Endothelial cell of umbilical vein (primary cell): ENCODE measurements at regions of chr22 and their contacts with region 1.

Region 1: DNA sequence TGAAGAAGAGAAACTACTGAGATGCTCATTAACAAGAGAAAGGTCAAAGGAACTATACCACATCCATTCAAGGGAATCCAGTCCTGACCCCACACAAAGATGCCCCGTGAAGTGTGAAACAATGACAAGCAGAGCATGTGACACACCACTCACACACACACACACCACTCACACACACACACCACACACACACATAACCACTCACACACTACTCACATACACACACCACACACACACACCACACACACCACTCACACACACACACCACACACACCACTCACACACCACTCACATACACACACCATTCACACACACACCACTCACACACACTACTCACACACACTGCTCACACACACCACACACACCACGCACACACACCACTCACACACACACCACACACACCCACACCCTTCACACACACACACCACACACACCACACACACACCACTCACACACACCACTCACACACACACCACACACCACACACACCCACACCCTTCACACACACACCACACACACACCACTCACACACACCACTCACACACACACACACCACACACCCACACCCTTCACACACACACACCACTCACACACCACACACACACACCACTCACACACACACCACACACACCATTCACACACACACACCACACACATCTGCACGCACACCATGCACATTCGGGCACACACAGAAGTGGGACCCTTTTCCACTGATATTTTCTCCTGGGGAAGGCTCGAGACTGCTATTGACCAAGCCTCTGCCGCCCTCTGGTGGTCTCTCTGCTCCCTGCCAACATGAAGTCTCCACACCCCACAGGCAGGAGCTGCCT is 32.0 kb upstream of the COMT start:
- DNase-seq: peak; percentile 77
- H3K4me3 ChIP-seq: no peak overlapping the region
- H3K27ac ChIP-seq: no peak overlapping the region
- H3K4me1 ChIP-seq: peaks cover 3% of the 10 kb centered on the region
- H3K27me3 ChIP-seq: no peaks in the 10 kb centered on the region
- CTCF ChIP-seq: peak; percentile 86 to 88
- POLR2A ChIP-seq: no peak

Region 2: DNA sequence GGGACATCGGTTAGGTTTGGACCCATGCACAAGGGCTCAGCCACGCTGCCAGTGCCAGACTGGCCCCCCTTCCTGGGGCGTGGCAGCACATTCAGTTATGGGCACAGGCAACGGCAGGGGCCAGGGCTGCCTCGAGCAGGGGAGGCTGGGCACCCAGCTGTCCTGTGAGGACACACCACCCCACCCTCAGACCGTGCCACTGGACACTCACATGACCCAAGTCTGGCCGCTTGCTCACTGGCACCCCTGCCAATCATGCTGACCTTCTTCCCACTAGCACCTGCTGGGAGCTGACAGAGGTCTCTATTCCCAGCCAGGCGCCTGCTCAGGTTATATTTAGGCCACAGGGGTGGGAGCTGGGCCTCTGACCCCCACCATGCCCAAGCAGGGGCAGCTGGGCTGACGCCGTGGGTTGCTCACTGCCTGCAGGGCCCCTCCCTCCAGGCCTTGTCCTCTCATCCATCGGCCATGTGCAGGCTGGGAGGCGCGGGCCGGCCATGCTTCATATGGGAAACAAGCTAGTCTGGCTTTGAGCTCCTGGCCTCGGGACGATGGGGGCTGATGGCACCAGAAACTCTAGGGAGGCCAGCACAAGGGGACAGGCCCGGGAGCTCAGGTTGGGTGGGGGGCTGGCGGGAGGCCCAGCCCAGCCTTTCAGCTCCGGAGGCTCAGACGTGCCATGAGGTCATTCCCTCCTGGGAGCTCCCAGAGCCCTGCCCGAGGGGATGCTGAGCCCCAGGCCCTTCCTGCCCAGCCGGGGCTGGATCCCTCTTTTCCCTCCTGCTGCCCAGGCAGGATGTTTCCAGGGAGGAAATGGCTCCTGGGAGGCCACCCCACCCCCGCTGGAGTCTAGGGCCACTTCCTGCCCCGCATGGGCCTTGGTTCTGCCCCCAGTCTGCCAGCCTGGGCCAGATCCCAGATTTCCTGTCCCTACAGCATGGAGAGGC is 164.1 kb before region 1 on chr22:
- CTCF ChIA-PET with region 1: interaction called, 19 read pairs
- POLR2A ChIA-PET with region 1: no interaction called
- dilution Hi-C with region 1: no loop called
- intact Hi-C with region 1: no loop called
- DNase-seq: no peak
- H3K4me3 ChIP-seq: no peak overlapping the region
- H3K27ac ChIP-seq: no peak overlapping the region
- H3K4me1 ChIP-seq: peaks cover 9% of the 10 kb centered on the region
- H3K27me3 ChIP-seq: no peaks in the 10 kb centered on the region
- CTCF ChIP-seq: no peak
- POLR2A ChIP-seq: no peak

Region 3: DNA sequence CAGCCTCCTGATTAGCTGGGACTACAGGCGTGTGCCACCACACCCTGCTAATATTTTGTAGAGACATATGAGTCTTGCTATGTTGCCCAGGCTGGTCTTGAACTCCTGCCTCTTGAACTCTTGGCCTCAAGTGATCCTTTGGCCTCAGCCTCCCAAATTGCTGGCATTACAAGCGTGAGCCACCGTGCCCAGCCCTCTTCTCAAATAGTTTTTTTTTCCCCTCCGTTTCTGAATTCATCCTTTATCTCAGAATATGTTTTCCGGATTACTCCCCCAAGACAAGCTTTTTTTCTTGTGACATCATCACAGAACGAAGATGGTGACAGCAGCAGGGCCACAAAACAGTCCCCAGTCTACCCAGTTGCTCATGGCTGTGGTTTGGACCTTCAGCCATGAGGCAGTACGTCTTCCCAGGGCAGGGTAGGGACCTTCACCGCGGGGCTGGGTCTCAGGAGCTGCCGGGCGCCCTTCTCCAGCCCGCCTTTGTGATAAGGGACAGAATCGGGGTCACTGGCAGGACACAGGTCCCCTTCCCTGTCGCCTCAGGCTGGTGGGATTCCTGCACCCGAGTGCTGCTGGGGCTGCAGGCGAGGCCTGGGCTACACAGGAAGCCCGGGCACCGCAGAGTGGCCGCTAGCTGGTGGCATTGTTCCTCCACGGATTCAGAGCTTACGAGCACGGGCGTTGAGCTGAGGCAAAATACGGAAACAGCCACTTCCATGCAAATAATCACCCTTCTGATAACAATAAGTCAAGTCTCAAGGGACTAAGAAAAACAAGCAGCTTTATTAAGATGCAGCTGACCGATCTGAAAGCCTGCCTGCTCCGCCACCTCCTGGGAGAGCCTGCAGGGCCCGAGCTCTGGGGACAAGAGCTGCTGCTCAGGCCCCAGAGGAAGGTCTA is 136.9 kb before region 1 on chr22:
- CTCF ChIA-PET with region 1: interaction called, 15 read pairs
- POLR2A ChIA-PET with region 1: no interaction called
- dilution Hi-C with region 1: no loop called
- intact Hi-C with region 1: loop called (anchors 5 kb)
- DNase-seq: peak; percentile 83
- H3K4me3 ChIP-seq: no peak overlapping the region
- H3K27ac ChIP-seq: no peak overlapping the region
- H3K4me1 ChIP-seq: peaks cover 12% of the 10 kb centered on the region
- H3K27me3 ChIP-seq: peaks cover 6 to 9% of the 10 kb centered on the region in 2 experiments
- CTCF ChIP-seq: peak; percentile 15 to 29
- POLR2A ChIP-seq: no peak

Region 4: DNA sequence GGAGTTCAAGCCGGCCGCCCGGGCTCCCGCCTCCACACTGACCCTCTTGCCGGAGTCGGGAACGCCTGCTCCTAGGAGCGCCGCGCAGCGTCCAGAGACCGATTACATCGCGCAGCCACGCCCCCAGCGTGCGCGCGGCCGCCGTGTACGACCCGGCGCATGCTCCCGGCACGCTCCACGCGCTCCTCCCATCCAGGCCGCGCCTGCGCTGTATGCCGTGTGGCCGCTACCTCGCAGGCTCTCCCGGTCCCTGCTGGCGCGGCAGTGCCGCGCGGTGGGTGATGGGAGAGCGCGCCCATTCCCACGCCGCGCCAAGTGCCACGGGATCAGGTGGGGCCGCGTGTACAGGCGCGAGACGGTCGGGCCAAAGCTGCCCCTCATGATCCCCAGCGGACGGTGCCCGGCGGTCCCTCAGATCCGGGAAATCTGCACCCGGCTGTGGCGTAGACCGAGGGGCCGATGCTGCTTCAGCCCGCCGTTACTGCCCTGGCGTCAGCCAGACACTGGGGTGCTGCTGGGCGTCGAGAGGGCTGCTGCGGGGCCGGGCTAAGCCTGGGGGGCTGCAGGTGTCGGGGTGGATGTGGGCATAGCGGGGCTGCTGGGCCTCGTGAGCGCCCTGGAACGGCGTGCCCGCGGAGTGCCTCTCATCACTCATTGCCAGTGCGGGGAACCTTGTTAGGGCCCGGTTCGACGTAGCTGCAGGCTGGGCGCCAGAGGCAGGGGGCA is 54.6 kb before region 1 on chr22 and contains the starts of genes GNB1L and RTL10:
- CTCF ChIA-PET with region 1: interaction called, 12 read pairs
- POLR2A ChIA-PET with region 1: no interaction called
- dilution Hi-C with region 1: no loop called
- intact Hi-C with region 1: no loop called
- DNase-seq: peak; percentile 98
- H3K4me3 ChIP-seq: peak within 1 kb of the TSS; percentile 78 to 97 (median 88)
- H3K27ac ChIP-seq: peak within 1 kb of the TSS; percentile 65
- H3K4me1 ChIP-seq: peaks cover 32% of the 10 kb centered on the region
- H3K27me3 ChIP-seq: no peaks in the 10 kb centered on the region
- CTCF ChIP-seq: no peak
- POLR2A ChIP-seq: peak; percentile 98
- total RNA-seq, gene GNB1L: 5.9 and 11.2 TPM in 2 replicates
- total RNA-seq, gene RTL10: 31.9 and 32.1 TPM in 2 replicates

Region 5: GRCh38 chr22:19891317-19892256 is 18.0 kb before region 1 on chr22:
- CTCF ChIA-PET with region 1: interaction called, 16 read pairs
- POLR2A ChIA-PET with region 1: no interaction called
- dilution Hi-C with region 1: no loop called
- intact Hi-C with region 1: no loop called
- DNase-seq: peak; percentile 90
- H3K4me3 ChIP-seq: no peak overlapping the region
- H3K27ac ChIP-seq: peak overlapping the region; percentile 83
- H3K4me1 ChIP-seq: peaks cover 69% of the 10 kb centered on the region
- H3K27me3 ChIP-seq: no peaks in the 10 kb centered on the region
- CTCF ChIP-seq: no peak
- POLR2A ChIP-seq: peak; percentile 87

Region 6: DNA sequence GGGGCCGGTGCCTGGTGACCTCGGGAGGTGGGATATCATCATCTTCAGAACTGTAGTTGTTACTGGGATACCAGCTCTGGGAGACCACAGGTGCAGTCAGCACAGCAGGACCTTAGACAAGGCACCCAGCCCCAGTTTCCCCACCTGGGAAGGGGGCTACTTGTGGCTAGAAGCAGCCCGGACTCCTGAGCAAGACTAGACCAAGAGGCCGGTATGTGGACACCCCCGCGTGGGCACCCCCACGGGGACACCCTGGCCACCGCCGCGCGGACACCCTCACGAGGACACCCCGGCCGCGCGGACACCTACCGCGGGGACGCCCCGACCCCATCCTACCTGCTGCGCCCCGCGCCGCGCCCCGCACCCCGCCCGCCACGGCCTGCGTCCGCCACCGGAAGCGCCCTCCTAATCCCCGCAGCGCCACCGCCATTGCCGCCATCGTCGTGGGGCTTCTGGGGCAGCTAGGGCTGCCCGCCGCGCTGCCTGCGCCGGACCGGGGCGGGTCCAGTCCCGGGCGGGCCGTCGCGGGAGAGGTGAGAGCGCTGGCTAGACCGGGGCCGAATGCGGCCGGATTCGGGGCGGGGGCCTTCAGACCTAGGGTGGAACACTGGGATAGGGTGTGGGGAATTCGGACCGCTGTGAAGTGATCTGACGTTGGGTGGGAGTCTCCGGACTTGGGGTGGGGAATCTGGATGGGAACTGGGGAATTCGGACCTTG is 32.0 kb after region 1 on chr22 and contains the starts of genes COMT and TXNRD2:
- CTCF ChIA-PET with region 1: interaction called, 13 read pairs
- POLR2A ChIA-PET with region 1: no interaction called
- dilution Hi-C with region 1: no loop called
- intact Hi-C with region 1: no loop called
- DNase-seq: peak; percentile 57
- H3K4me3 ChIP-seq: peak within 1 kb of the TSS; percentile 45 to 86 (median 83)
- H3K27ac ChIP-seq: peak within 1 kb of the TSS; percentile 84
- H3K4me1 ChIP-seq: peaks cover 41% of the 10 kb centered on the region
- H3K27me3 ChIP-seq: no peaks in the 10 kb centered on the region
- CTCF ChIP-seq: no peak
- POLR2A ChIP-seq: peak; percentile 82
- total RNA-seq, gene COMT: 221 and 246 TPM in 2 replicates
- total RNA-seq, gene TXNRD2: 211 and 245 TPM in 2 replicates

Region 7: GRCh38 chr22:20536590-20537324 is 627.2 kb after region 1 on chr22:
- CTCF ChIA-PET with region 1: no interaction called
- POLR2A ChIA-PET with region 1: no interaction called
- dilution Hi-C with region 1: no loop called
- intact Hi-C with region 1: no loop called
- DNase-seq: no peak
- H3K4me3 ChIP-seq: no peak overlapping the region
- H3K27ac ChIP-seq: no peak overlapping the region
- H3K4me1 ChIP-seq: peaks cover 13% of the 10 kb centered on the region
- H3K27me3 ChIP-seq: no peaks in the 10 kb centered on the region
- CTCF ChIP-seq: no peak
- POLR2A ChIP-seq: no peak